ENCODE measurements at regions of chr4 and their contacts with region 1.

Region 1: DNA sequence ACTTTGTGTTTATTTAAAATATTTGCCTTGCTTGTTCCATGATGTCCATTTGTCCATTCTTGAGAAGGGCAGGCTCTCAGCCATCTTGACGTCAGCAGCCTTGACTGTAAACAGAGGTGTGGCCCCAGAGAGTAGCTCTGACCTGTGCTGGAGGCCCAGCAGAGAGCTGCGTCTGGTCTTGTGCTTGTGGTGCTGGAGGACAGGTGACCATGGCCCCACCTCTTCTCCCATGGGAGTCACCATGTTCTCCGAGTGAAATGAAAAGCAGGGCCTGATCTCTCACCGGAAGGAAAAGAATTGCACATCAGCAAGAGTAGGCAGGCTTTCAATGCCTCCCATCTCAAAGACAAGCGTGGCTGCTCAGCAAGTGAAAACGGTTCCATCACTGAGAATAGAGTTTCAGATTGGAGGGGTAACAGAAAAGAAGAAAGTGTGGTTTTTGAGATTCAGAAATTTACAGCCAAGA is 11.4 kb downstream of the PARM1 start:
- DNase-seq: no peak
- ATAC-seq: no peak
- H3K4me3 ChIP-seq: no peak overlapping the region
- H3K27ac ChIP-seq: no peak overlapping the region
- H3K4me1 ChIP-seq: no peaks in the 10 kb centered on the region
- H3K27me3 ChIP-seq: no peaks in the 10 kb centered on the region
- CTCF ChIP-seq: no peak
- POLR2A ChIP-seq: no peak

Region 2: DNA sequence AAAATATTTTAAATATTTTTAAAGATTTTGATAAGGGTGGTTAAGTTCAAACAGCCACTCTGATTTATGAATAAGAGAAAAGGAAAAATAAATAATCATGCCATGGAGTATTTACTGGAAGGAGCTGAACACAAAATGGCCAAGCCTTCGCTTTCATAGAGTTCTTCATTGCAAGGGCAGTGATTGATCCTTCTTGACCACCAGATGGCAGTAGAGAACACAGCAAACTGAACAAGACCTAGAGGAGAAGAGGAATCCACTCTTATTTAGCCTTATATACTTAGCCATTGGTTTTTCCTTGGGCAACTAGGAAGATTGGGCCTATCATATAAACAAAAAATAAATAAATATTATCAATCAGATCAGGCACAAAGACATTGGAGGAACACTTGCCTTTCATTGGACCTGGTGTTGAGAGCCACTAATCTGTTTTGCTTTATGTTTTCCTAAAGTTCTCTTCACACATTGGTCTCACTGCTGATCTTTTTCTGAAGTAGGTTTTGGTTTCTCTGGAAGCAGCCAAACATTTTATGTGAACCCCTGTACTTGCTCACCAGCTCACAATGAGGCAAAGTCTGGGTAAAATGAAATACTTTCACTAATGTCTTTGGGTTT is 69.5 kb before region 1 on chr4:
- intact Hi-C with region 1: loop called in 1 of 2 experiments (anchors 5 kb)
- DNase-seq: peak in 1 of 3 donors; percentile 47
- ATAC-seq: peak; percentile 90 to 98 (median 94)
- H3K4me3 ChIP-seq: no peak overlapping the region
- H3K27ac ChIP-seq: no peak overlapping the region
- H3K4me1 ChIP-seq: no peaks in the 10 kb centered on the region
- H3K27me3 ChIP-seq: peaks cover 0 to 6% of the 10 kb centered on the region in 2 donors
- CTCF ChIP-seq: peak; percentile 76 to 98 (median 93)
- POLR2A ChIP-seq: no peak

Measured in right lobe of liver (tissue), 6 donors.